Activated T-helper 2 cell treated with anti-CD3 and anti-CD28 coated beads, Interferon-gamma antibody, Interleukin-2, Interleukin-4, amounts not matched to agents 10 μg/mL and 5 μg/mL and 100 μg/mL, durations not matched to agents 14 hours and 24 hours and 36 hours (primary cell): ENCODE measurements at regions of chr12 and their contacts with region 1.

Region 1: DNA sequence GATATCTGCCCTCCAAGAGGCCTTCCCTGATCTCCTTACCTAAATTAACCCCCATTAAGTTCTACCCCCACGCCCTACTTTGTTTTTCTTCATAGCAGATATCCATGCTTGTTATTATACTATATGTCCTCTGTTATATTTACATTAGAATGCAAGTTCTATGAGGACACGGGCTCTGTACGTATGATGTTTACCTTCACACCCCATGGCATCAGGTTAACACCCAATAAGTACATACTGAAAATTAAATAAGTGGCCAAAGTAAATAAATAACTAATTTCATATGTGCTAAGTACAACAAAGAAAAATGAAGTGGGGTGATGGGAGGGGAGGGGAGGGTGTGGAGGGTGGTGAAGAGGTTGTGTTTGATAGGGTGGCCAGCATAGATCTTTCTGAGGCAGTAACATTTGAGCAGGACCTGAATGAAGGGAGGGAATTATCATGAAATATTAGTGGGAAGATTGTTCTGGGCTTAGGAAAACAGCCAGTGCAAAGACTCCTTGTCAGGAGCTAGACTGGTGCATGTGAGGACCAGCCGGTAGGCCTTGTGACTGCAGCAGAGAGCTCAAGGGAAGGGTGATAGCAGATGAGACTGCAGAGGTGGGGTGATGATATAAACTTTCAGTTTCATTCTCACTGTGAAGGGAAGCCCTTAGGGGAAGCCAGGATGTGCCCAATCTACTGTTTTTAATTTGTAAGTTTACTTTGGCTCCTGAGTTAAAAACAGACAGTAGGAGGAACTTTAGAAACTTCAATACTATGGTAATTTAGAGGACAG is 12.6 kb downstream of the IL22 start:
- DNase-seq: peak; percentile 53
- H3K4me3 Mint-ChIP-seq: peak overlapping the region; percentile 38
- H3K27ac Mint-ChIP-seq: peak overlapping the region; percentile 86
- H3K4me1 Mint-ChIP-seq: peaks cover 44% of the 10 kb centered on the region
- H3K27me3 Mint-ChIP-seq: peaks cover 15% of the 10 kb centered on the region

Region 2: GRCh38 chr12:67842124-67842523 is 398.7 kb before region 1 on chr12:
- intact Hi-C with region 1: no loop called
- DNase-seq: no peak
- H3K4me3 Mint-ChIP-seq: no peak overlapping the region
- H3K27ac Mint-ChIP-seq: no peak overlapping the region
- H3K4me1 Mint-ChIP-seq: no peaks in the 10 kb centered on the region
- H3K27me3 Mint-ChIP-seq: peaks cover 3% of the 10 kb centered on the region

Region 3: DNA sequence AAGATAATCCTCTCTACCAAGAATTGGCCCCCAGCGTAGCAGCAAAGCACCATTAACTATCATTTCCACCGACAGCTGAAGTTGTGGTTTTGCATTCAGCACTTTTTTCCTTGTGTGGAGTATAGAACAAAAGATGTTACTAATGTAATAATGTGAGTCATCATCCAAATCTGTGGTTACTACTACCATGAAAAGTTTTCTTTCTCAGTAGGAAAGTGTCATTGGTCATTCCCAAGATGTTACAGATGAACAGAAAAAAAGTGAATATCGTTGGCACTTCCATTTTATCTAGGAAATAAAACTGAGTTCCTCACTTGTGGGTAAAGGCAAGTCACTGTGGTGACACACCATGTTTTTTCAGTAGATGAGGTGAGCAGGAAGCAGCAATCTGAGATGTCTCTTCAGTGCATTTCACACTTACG is 51.0 kb before region 1 on chr12:
- intact Hi-C with region 1: loop called (anchors 2 kb)
- DNase-seq: no peak
- H3K4me3 Mint-ChIP-seq: no peak overlapping the region
- H3K27ac Mint-ChIP-seq: peak overlapping the region; percentile 56
- H3K4me1 Mint-ChIP-seq: peaks cover 16% of the 10 kb centered on the region
- H3K27me3 Mint-ChIP-seq: peaks cover 52% of the 10 kb centered on the region

Region 4: GRCh38 chr12:68223083-68223747 is 17.6 kb before region 1 on chr12:
- intact Hi-C with region 1: loop called (anchors 1 kb)
- DNase-seq: peak; percentile 59
- H3K4me3 Mint-ChIP-seq: no peak overlapping the region
- H3K27ac Mint-ChIP-seq: no peak overlapping the region
- H3K4me1 Mint-ChIP-seq: peaks cover 25% of the 10 kb centered on the region
- H3K27me3 Mint-ChIP-seq: peaks cover 44% of the 10 kb centered on the region

Region 5: DNA sequence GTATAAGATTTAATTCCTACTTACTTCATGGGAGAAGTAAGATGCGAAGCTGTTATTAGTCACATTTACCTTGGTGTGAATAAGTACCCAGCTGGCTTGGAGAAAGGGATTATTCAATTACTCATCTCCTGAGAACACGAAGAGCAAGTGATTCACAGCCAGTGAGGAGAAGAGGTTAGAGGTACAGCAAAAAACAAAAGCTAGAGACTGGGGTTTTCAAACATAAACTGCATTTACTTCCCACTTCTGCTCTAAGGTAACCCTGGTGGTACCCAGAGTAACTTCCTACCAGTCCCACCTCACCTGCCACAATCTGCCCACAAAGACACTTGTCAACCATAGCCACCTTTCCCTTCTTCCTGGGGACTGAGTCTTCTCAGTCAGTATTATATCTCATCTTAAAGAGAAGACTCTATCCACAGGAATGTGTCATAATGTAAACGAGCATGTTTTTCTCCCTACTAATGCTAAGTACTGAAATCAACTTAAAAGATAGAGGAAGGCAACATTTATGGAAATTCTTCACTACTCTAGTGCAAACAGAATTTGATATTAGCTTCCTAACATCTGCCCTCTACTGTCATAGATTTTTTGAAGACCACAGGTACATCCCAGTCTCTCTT is 18.6 kb after region 1 on chr12:
- intact Hi-C with region 1: loop called (anchors 1 kb)
- DNase-seq: no peak
- H3K4me3 Mint-ChIP-seq: no peak overlapping the region
- H3K27ac Mint-ChIP-seq: peak overlapping the region; percentile 44
- H3K4me1 Mint-ChIP-seq: peaks cover 28% of the 10 kb centered on the region
- H3K27me3 Mint-ChIP-seq: peaks cover 58% of the 10 kb centered on the region

Region 6: DNA sequence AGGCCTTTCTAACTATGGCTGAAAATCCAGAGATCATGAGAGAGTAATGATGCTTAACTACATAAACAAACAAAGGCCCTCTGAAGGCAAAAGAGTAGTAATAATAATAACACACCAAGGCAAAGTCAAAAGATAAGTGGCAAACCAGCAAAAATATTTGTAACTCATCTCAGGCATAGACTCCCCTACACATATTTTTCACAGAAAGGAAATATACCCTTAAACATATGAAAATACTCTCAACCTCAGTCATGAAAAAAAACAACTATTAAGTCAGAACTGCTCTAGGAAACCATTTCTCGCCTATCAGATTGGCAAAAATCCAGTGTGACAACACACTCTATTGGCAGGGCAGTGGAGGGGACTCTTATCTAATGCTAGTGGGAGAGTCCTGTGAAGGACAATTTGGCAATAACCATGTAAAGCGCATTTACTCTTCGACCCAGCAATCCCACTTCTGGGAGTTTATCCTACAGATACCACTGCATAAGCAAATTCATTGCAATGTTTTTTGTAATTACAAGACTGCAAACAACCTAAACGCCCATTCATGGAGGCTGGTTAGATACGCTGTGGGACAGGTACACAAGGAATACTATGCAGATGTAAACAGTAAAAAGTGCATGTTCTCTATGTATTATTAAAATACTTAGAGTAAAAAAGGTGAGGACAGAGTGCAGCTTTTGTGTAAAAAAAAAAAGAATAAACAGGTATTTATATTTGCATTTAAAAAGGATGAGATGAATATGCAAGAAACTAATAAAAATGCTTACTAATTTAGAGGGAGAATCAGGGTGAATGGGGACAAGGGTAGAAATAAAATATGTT is 38.7 kb after region 1 on chr12:
- intact Hi-C with region 1: loop called (anchors 2 kb)
- DNase-seq: no peak
- H3K4me3 Mint-ChIP-seq: no peak overlapping the region
- H3K27ac Mint-ChIP-seq: peak overlapping the region; percentile 23
- H3K4me1 Mint-ChIP-seq: peaks cover 60% of the 10 kb centered on the region
- H3K27me3 Mint-ChIP-seq: peaks cover 38% of the 10 kb centered on the region

Region 7: DNA sequence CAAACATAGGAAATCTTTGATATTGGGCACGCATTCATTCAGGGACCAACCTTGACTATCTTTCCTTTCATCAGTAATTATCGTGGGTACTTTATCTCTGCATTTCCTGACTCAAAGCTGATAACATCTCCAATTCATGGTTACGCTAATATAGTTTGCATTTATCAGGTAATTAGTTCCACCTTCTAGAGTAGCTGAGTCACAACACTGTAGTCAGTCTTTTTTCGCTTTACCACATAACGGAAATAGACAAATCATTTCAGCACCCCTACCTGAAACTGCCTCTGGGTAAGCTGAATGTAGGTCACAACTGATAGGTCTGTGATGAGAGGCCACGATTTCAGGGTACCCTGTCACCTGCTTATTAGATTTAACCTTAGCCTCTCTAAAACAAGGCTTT is 49.3 kb after region 1 on chr12:
- intact Hi-C with region 1: loop called (anchors 1 kb)
- DNase-seq: peak; percentile 36
- H3K4me3 Mint-ChIP-seq: no peak overlapping the region
- H3K27ac Mint-ChIP-seq: no peak overlapping the region
- H3K4me1 Mint-ChIP-seq: peaks cover 35% of the 10 kb centered on the region
- H3K27me3 Mint-ChIP-seq: peaks cover 28% of the 10 kb centered on the region